Transverse colon (tissue), 4 donors: ENCODE measurements at regions of chr18 and their contacts with region 1.

Region 1: DNA sequence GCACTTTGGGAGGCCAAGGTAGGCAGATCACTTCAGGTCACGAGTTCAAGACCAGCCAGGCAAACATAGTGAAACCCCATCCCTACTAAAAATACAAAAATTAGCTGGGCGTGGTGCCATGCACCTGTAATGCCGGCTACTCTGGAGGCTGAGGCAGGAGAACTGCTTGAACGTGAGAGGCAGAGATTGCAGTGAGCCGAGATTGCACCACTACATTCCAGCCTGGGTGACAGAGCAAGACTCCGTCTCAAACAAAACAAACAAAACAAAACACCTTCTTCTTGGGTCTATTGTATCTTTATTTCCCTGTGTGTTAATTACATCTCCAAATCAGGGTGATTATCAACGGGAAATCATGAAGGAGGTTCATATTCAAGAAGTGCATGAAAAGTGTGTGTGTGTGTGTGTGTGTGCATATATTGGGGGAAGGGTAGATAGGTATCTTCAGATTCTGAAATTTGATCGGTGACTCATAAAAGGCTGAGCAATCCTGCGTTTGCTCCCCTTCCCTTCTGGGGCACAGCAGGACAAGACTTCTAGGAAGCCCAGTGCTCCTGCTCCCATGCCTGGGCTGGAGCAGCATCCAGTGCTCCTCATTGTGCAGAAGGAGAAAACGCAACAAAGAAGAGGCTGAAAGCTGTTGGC is 25.7 kb downstream of the MC5R start:
- DNase-seq: no peak
- H3K4me3 ChIP-seq: no peak overlapping the region
- H3K27ac ChIP-seq: no peak overlapping the region
- H3K4me1 ChIP-seq: no peaks in the 10 kb centered on the region
- H3K27me3 ChIP-seq: no peaks in the 10 kb centered on the region
- CTCF ChIP-seq: no peak
- EP300 ChIP-seq: no peak
- POLR2A ChIP-seq: no peak

Region 2: DNA sequence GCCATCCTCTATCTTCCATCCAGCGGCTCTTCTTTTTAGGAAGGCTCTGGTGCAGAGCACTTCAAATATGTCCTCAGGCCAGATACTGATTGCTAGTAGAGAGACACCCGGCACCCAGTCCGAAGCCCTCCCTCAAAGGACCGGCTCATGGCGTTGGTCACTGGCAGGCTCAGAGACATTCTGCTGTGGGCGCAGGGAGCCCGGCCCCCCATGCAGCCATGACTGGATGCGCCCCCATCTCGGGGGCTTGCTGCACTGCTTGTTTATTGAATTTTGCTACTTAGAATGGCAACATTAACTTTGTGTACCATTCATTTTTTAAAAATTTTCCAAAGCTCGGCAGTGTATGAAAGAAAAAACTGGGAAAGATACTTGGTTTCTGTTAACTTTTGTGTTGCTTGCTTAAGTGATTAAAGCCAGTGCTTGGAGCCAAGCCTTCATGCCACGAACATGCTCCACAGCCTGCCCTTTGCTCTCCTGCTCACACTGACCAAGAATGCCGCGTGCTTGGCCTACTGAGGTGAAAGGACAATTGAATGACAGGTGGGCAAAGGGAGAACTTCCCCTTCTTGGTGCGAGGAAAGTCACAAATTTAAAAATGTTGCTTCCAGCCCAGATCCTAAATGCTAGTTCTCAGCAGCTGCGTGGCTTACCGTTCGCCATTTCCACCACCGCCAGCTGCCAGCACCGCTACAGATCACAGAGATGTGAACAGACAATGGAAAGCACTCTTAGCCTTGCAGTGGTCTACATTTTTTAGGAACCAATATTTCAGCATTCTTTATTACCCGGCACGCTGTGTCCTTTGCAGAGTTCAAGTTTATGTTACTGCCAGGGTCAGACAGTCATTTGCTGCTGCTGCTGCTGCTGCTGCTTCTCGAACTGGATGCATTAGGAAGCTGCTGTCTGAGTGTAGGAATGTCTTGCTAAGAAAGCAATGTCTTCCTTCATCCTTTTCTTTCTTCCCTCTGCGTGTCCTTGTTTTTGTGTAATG is 200.0 kb before region 1 on chr18:
- in situ Hi-C with region 1: no loop called
- intact Hi-C with region 1: no loop called
- DNase-seq: no peak
- H3K4me3 ChIP-seq: no peak overlapping the region
- H3K27ac ChIP-seq: no peak overlapping the region
- H3K4me1 ChIP-seq: no peaks in the 10 kb centered on the region
- H3K27me3 ChIP-seq: no peaks in the 10 kb centered on the region
- CTCF ChIP-seq: no peak
- EP300 ChIP-seq: no peak
- POLR2A ChIP-seq: no peak

Region 3: DNA sequence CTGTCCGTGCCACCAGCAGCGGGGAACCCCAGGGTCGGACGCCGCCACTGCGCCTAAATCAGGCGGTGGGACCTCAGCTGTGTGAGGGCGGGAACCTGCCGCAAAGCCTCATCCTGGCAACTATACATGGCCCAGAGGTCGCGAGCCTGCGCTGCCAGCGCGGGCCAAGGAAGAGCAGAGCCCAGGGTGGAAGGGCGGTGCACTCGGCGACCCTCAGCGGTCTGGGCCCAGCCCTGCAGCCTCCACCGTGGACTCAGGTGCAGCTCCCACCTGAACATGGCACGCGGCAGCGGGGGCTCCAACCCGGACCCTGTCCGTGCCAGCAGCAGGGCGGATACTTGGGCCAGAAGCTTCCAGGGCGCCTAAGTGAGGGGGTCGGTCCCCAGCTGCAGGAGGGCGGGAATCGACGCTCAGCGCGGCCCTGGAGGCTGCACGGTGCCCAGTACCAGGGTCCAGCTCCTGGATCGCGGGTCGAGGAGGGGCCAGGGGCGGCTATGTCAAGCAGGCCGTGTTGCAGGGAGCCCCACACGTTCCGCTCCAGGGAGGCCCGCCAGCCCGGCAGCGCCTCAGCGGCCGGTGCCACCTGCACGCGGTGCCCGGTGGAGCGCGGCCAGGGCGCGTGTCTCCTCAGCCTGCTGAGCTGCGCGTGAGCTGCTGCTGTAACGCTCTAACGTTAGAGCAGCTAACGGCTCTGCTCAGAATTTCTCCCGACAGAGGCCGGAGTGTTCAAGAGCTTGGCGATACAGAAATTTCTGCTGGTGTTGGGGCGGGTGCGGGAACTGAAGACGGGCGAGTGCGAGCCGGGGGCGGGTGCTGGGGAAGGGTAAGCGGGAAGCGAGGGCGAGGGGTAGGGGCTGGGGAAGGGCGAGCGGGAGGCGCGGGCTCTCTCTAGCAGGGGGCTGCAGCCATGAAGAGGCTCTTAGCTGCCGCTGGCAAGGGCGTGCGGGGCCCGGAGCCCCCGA is 898.1 kb after region 1 on chr18 and contains the start of gene ANKRD30B:
- in situ Hi-C with region 1: no loop called
- intact Hi-C with region 1: loop called (anchors 10 kb)
- DNase-seq: no peak
- H3K4me3 ChIP-seq: no peak within 1 kb of the TSS
- H3K27ac ChIP-seq: no peak within 1 kb of the TSS
- H3K4me1 ChIP-seq: no peaks in the 10 kb centered on the region
- H3K27me3 ChIP-seq: peaks cover 13% of the 10 kb centered on the region
- CTCF ChIP-seq: no peak
- EP300 ChIP-seq: no peak
- POLR2A ChIP-seq: no peak
- total RNA-seq, gene ANKRD30B: 0.79 TPM in 1 of 4 donors, not detected in the others